ENCODE measurements at regions of chr7 and their contacts with region 1.

Region 1: DNA sequence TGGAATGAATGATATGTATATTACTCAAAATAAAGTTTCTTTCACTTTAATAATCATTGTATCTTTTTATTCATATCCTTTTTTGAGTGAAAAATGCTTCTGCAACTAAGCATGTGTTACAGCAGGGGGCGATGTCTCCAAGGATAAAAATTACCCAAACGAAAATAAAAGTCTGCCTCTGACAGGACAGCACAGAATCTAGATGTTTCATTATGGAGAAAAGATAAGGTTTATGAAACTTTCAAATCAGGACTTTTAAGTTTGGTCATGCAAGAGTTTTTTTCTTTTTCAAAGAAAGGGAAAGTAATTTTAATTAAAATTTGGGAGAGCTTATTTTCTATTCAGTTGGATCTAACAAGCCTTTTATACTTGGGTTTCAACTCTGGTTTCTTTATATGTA is 48.4 kb downstream of the TES start:
- DNase-seq: no peak
- H3K4me3 Mint-ChIP-seq: no peak overlapping the region
- H3K27ac Mint-ChIP-seq: no peak overlapping the region
- H3K4me1 Mint-ChIP-seq: peaks cover 5% of the 10 kb centered on the region
- H3K27me3 Mint-ChIP-seq: no peaks in the 10 kb centered on the region

Region 2: DNA sequence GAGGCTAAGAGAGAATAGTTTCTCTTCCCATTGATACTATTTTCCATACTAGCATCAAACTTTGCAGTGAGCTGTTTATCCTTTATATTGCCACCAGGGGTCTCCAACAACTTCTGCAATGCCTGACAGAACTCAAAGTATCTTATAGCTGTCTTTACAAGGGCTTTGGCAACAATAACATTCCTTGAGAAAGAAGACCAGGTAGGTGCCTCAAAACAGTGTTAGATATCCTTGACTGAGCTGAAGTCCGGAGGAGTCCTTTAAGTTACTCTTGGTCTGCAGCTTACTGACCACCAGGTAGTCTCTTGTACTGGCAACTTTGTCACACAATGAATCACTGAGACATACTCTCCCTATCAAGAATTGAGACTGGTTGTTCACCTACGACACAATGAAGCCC is 78.4 kb before region 1 on chr7:
- intact Hi-C with region 1: no loop called
- DNase-seq: peak; percentile 13
- H3K4me3 Mint-ChIP-seq: no peak overlapping the region
- H3K27ac Mint-ChIP-seq: no peak overlapping the region
- H3K4me1 Mint-ChIP-seq: no peaks in the 10 kb centered on the region
- H3K27me3 Mint-ChIP-seq: peaks cover 2% of the 10 kb centered on the region

Region 3: GRCh38 chr7:116242178-116242577 is 16.6 kb before region 1 on chr7:
- intact Hi-C with region 1: loop called (anchors 2 kb)
- DNase-seq: no peak
- H3K4me3 Mint-ChIP-seq: no peak overlapping the region
- H3K27ac Mint-ChIP-seq: no peak overlapping the region
- H3K4me1 Mint-ChIP-seq: peaks cover 5% of the 10 kb centered on the region
- H3K27me3 Mint-ChIP-seq: no peaks in the 10 kb centered on the region

Region 4: GRCh38 chr7:116679500-116679899 is 420.8 kb after region 1 on chr7:
- intact Hi-C with region 1: loop called (anchors 5 kb)
- DNase-seq: no peak
- H3K4me3 Mint-ChIP-seq: peak overlapping the region; percentile 12
- H3K27ac Mint-ChIP-seq: no peak overlapping the region
- H3K4me1 Mint-ChIP-seq: peaks cover 15% of the 10 kb centered on the region
- H3K27me3 Mint-ChIP-seq: peaks cover 22% of the 10 kb centered on the region

Region 5: DNA sequence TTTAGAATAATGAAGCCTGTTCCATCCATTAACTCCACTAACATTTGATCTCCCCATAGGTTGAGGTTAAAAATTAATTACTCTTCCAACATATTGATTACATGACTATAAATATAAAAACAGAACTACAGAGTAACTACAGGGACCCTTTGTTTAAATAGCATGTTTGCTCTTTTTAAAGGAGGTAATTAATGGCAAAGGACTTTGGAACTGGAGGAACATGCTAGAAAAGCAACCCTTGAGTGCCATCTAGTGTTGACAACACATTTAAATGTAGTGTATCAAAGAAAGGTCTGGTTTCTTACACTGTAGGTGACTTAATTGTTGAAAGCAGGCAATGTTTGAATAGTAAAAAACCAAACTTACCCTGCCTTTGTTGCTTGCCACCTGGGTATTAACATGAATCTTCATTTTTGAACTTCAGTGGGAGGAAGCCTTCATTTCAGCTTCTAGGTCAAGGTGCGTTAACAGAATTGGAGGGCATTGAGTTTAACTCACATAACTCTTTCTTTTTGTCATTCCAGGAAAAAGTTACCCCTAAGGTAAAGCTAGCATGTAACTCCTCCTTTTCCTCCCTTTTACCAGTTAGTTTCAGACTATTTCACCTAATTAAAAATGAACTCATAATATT is 551.0 kb after region 1 on chr7:
- intact Hi-C with region 1: loop called (anchors 1 kb)
- DNase-seq: peak; percentile 3
- H3K4me3 Mint-ChIP-seq: no peak overlapping the region
- H3K27ac Mint-ChIP-seq: no peak overlapping the region
- H3K4me1 Mint-ChIP-seq: no peaks in the 10 kb centered on the region
- H3K27me3 Mint-ChIP-seq: peaks cover 9% of the 10 kb centered on the region

Measured in activated T-helper 1 cell treated with anti-CD3 and anti-CD28 coated beads, Interleukin-12 subunit alpha, Interleukin-12 subunit beta, Interleukin-2, Interleukin-4 antibody, amounts not matched to agents 30 ng/mL and 10 ng/mL and 1 ng/mL, durations not matched to agents 14 hours and 24 hours and 36 hours (primary cell).